ENCODE measurements at regions of chr7 and their contacts with region 1.

Region 1: DNA sequence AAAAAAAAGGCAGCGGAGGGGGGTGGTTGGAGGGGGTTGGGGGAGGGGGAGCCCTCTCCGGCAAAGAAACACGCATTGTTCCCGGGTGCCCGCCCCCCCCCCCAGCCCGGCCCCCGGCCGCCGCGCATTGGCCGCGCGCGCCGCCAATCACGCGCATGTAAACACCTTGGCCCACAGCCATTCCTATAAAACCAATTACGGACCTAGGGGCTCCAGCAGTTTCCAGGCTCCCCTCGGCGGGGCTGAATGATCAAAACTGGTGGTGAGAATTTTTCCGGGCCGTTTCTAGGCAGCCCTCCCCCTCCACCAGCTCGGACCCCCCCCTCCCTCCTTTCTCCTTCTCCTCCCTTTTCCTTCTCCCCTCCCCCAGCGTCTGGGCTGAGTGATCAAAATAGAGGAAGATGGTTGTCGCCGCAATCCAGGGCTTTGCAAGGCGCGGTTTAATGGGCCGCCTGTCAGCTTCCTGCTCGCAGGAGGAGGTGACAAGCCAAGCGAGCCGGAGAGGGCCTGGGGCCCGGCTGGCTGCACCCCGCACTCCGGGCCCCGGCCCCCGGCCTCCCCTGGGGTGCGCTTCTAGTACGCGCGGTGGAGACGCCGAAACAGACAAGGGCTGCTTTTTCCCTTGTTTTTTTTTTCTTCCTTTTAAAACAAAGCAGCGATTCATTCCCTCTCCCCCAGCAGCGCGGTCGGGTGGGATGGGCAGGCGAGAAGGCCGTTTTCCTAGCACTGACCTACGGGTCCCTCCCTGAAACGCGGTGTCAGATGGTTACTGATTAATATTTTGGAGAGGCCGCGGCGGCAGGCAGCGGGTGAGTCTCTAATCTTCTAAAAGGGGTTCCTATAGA is 432 bp upstream of the TNRC18 start:
- DNase-seq: peak; percentile 91 to 99 (median 96)
- ATAC-seq: peak; percentile 27
- H3K4me3 ChIP-seq: peak overlapping the region; percentile 93
- H3K27ac ChIP-seq: peak overlapping the region; percentile 98
- H3K4me1 ChIP-seq: peaks cover 30 to 87% of the 10 kb centered on the region in 2 experiments
- H3K27me3 ChIP-seq: no peaks in the 10 kb centered on the region
- CTCF ChIP-seq: no peak
- EP300 ChIP-seq: peak; percentile 50; the same call in 1 of the 2 replicates
- POLR2A ChIP-seq: no peak; the same call in 1 of the 2 replicates
- RAD21 ChIP-seq: no peak

Region 2: GRCh38 chr7:5406957-5407945 is 16.8 kb before region 1 on chr7:
- CTCF ChIA-PET with region 1: no interaction called
- POLR2A ChIA-PET with region 1: interaction called, 12 read pairs
- in situ Hi-C with region 1: no loop called
- intact Hi-C with region 1: no loop called
- DNase-seq: peak in 1 of 4 experiments; percentile 23
- ATAC-seq: peak; percentile 39; the same call in 2 of the 3 replicates
- H3K4me3 ChIP-seq: no peak overlapping the region
- H3K27ac ChIP-seq: no peak overlapping the region
- H3K4me1 ChIP-seq: peaks cover 0 to 14% of the 10 kb centered on the region in 2 experiments; a peak in 3 of 5 replicates
- H3K27me3 ChIP-seq: no peaks in the 10 kb centered on the region
- CTCF ChIP-seq: no peak
- EP300 ChIP-seq: no peak
- POLR2A ChIP-seq: no peak
- RAD21 ChIP-seq: no peak

Region 3: GRCh38 chr7:5507013-5507412 is 82.9 kb after region 1 on chr7:
- CTCF ChIA-PET with region 1: no interaction called
- POLR2A ChIA-PET with region 1: no interaction called
- in situ Hi-C with region 1: no loop called
- intact Hi-C with region 1: no loop called
- DNase-seq: no peak
- ATAC-seq: no peak
- H3K4me3 ChIP-seq: no peak overlapping the region
- H3K27ac ChIP-seq: no peak overlapping the region
- H3K4me1 ChIP-seq: peaks cover 0 to 8% of the 10 kb centered on the region in 2 experiments; a peak in 3 of 5 replicates
- H3K27me3 ChIP-seq: no peaks in the 10 kb centered on the region
- CTCF ChIP-seq: no peak
- EP300 ChIP-seq: no peak
- POLR2A ChIP-seq: no peak
- RAD21 ChIP-seq: no peak

Measured in K562 (cell line).